ENCODE measurements at regions of chr2 and their contacts with region 1.

Region 1: GRCh38 chr2:216698895-216699294 is 3.5 kb upstream of the IGFBP5 start:
- DNase-seq: peak in 1 of 10 donors; percentile 30
- H3K4me3 ChIP-seq: peak overlapping the region in 1 of 59 donors; percentile 21
- H3K27ac ChIP-seq: peak overlapping the region in 2 of 59 donors; percentile 36 to 41
- H3K27me3 ChIP-seq: peaks cover 0 to 12% (median 0%) of the 10 kb centered on the region in 45 donors
- CTCF ChIP-seq: peak in 55 of 56 donors; percentile 23 to 80 (median 68)

Region 2: DNA sequence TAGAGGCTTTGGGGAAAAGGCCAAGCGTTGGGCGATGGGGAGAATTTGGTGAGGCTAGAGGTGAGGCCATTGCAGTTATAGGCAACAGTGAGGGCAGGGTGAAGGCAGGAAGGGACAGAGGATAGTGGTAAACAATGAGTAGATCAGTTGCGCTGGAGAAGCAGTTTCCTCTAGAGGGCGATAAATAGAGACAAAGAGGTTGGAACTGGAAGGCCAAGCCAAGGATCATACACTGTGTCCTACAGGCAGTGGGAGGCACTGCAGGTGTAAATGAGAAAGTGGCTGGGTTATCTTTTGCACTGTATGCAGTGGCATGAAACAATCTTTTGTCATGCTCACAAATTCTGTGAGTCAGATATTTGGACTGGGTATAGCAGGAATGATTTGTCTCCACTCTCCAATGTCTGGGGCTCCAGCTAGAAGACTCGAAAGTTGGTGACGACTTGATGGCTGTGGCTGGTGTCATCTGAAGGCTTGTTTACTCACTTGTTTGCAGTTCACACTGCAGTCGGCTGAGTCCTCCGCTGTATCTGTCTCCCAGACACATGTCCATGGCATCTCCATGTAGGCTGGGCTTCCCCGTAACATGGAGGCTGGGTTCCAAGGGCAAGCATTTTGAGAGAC is 78.9 kb after region 1 on chr2:
- intact Hi-C with region 1: no loop called
- DNase-seq: no peak
- H3K4me3 ChIP-seq: no peak overlapping the region
- H3K27ac ChIP-seq: no peak overlapping the region
- H3K27me3 ChIP-seq: no peaks in the 10 kb centered on the region
- CTCF ChIP-seq: peak in 52 of 56 donors; percentile 9 to 59 (median 40)

Region 3: DNA sequence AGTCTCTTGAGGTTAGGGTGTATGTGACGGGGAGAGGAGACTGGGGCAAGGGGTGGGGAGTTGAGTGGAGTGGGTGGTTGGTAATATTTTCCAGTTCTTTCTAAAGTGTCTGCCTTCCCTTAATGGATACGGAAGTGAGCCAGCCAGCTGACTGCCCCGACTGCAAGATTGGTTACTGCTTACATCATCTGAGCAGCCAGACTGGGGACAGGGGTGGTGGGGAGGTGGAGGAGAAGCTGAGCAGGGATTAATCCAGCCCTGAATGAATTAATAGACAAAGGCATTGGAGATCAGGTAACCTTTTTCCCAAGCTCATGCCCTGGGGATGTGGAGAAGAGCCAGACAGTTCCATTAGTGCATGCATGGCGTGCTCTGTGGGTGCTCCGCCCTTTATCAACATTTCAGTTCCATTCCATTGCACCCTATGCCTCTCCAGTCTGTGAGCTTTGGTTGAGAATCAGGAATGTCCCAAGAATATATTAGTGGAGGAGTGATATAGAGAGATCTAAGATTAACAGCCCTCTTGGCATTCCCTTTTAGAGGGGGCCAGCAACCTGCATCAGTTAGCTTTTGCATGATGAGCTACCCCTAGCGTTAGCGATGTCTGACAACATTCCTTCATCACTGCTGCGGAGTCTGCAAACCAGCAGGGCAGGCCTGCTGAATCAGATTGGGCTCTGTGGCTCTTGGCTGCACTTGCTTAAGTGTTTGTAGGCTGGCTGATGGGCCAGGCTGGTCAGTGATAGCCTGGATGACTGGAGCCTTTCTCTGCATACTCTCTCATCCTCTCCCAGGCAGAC is 93.5 kb after region 1 on chr2:
- intact Hi-C with region 1: loop called in 1 of 2 experiments (anchors 10 kb)
- DNase-seq: no peak
- H3K4me3 ChIP-seq: no peak overlapping the region
- H3K27ac ChIP-seq: peak overlapping the region in 10 of 59 donors; percentile 5 to 59 (median 34)
- H3K27me3 ChIP-seq: peaks cover 0 to 2% (median 0%) of the 10 kb centered on the region in 45 donors
- CTCF ChIP-seq: no peak

Region 4: DNA sequence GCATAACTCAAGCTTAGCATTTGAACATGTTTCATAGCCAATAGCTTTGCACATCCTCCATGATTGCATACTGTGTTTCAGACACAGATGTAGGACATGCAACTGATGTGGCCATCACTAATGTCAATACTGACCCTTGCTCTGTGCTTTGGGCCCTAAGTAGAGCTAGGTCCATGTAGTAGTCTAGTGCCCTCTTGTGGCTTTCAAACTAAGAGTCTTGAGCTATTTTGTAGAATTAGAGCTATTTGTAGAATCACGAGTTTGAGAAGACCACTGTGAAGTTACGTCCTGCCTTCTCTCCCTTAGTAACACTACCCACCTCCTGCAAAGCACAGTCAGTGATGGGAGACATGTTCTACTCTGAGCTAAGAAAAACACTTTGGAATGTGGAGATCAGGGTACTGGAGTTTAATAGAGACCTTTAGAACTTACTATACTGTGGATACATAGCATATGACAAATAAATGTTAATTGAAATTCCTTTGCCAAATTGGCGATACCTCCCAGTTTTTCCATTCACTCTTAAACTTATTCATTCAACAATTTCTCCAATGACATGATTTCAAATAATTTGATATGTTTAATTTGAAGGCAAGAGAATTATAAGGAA is 467.5 kb after region 1 on chr2:
- intact Hi-C with region 1: loop called (anchors 2 to 5 kb)
- DNase-seq: no peak
- H3K4me3 ChIP-seq: no peak overlapping the region
- H3K27ac ChIP-seq: no peak overlapping the region
- H3K27me3 ChIP-seq: peaks cover 0 to 6% (median 0%) of the 10 kb centered on the region in 45 donors
- CTCF ChIP-seq: peak; percentile 10 to 83 (median 61)

Region 5: GRCh38 chr2:217632043-217632442 is 933.1 kb after region 1 on chr2:
- intact Hi-C with region 1: loop called in 1 of 2 experiments (anchors 10 kb)
- DNase-seq: peak in 2 of 10 donors; percentile 26 to 66
- H3K4me3 ChIP-seq: no peak overlapping the region
- H3K27ac ChIP-seq: peak overlapping the region in 3 of 59 donors; percentile 1 to 30 (median 14)
- H3K27me3 ChIP-seq: no peaks in the 10 kb centered on the region
- CTCF ChIP-seq: no peak

Region 6: GRCh38 chr2:217756375-217757107 is 1057.6 kb after region 1 on chr2:
- intact Hi-C with region 1: loop called (anchors 5 kb)
- DNase-seq: peak; percentile 64 to 87 (median 82)
- H3K4me3 ChIP-seq: peak overlapping the region; percentile 20 to 70 (median 52)
- H3K27ac ChIP-seq: peak overlapping the region in 10 of 59 donors; percentile 10 to 73 (median 27)
- H3K27me3 ChIP-seq: no peaks in the 10 kb centered on the region
- CTCF ChIP-seq: peak; percentile 66 to 99 (median 96)

Measured in dorsolateral prefrontal cortex (tissue), 120 donors.